Activated CD8-positive, alpha-beta T cell treated with anti-CD3 and anti-CD28 coated beads for 36 hours (primary cell): ENCODE measurements at regions of chr9 and their contacts with region 1.

Region 1: GRCh38 chr9:69054989-69055388 is 19.4 kb downstream of the FXN start:
- DNase-seq: no peak
- ATAC-seq: no peak
- H3K4me3 Mint-ChIP-seq: no peak overlapping the region
- H3K27ac Mint-ChIP-seq: no peak overlapping the region
- H3K4me1 Mint-ChIP-seq: peaks cover 2% of the 10 kb centered on the region
- H3K27me3 Mint-ChIP-seq: no peaks in the 10 kb centered on the region
- CTCF ChIP-seq: no peak

Region 2: DNA sequence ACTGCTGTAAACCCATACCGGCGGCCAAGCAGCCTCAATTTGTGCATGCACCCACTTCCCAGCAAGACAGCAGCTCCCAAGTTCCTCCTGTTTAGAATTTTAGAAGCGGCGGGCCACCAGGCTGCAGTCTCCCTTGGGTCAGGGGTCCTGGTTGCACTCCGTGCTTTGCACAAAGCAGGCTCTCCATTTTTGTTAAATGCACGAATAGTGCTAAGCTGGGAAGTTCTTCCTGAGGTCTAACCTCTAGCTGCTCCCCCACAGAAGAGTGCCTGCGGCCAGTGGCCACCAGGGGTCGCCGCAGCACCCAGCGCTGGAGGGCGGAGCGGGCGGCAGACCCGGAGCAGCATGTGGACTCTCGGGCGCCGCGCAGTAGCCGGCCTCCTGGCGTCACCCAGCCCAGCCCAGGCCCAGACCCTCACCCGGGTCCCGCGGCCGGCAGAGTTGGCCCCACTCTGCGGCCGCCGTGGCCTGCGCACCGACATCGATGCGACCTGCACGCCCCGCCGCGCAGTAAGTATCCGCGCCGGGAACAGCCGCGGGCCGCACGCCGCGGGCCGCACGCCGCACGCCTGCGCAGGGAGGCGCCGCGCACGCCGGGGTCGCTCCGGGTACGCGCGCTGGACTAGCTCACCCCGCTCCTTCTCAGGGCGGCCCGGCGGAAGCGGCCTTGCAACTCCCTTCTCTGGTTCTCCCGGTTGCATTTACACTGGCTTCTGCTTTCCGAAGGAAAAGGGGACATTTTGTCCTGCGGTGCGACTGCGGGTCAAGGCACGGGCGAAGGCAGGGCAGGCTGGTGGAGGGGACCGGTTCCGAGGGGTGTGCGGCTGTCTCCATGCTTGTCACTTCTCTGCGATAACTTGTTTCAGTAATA is 19.3 kb before region 1 on chr9 and contains the start of gene FXN:
- CTCF ChIA-PET with region 1: interaction called, 13 read pairs
- POLR2A ChIA-PET with region 1: interaction called, 3 read pairs
- intact Hi-C with region 1: no loop called
- DNase-seq: peak; percentile 82
- ATAC-seq: peak; percentile 95
- H3K4me3 Mint-ChIP-seq: peak within 1 kb of the TSS; percentile 95
- H3K27ac Mint-ChIP-seq: peak within 1 kb of the TSS; percentile 93
- H3K4me1 Mint-ChIP-seq: peaks cover 22% of the 10 kb centered on the region
- H3K27me3 Mint-ChIP-seq: no peaks in the 10 kb centered on the region
- CTCF ChIP-seq: peak; percentile 98
- total RNA-seq, gene FXN: 21.0 to 21.8 TPM

Region 3: DNA sequence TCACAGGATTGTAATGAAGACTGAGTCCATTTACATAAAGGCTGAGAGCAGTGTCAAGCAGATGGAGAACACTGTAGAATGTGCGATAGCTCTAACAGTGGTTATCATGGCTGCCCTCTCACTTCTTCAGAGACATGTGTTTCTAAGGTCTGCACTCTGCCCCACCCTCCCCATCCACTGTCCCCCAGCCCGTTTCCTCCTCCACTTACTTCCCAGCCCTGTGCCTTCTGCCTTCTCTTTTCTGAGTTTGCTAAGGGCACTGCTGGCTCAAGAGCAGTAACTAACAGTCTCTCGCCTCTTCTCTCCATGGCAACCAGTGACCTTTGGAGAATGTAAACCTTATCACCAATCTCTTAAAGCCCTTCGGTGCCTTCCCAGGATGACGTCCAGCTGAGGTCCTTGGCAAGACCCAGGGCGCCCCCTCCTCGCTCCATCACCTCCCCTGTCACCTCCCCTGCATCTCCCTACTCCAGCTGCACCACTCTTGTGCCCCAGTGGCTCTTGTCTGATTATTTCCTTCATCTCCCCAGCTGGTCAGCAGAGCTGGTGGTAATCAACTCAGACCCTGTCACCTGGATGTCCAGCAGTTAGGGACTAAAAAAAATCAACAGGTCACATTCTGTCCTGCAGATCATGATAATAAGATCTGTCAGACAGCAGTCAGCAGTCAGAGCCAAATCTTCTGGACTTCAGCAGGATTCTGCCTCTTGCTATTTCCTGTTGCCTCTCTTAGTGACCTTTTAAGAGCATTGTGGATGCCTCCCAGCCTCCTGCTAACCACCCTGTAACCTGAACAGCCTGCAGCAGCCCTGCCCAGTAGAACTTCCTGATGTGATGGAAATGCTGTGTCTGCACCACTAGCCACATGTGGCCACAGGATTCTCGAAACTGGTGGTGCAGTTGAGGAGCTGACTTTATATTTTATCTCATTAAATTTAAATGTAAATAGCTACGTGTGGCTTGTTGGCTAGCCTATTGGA is 10.5 kb before region 1 on chr9:
- CTCF ChIA-PET with region 1: interaction called, 10 read pairs
- POLR2A ChIA-PET with region 1: no interaction called
- intact Hi-C with region 1: no loop called
- DNase-seq: peak; percentile 45
- ATAC-seq: peak; percentile 87
- H3K4me3 Mint-ChIP-seq: no peak overlapping the region
- H3K27ac Mint-ChIP-seq: peak overlapping the region; percentile 59
- H3K4me1 Mint-ChIP-seq: peaks cover 19% of the 10 kb centered on the region
- H3K27me3 Mint-ChIP-seq: no peaks in the 10 kb centered on the region
- CTCF ChIP-seq: no peak

Region 4: DNA sequence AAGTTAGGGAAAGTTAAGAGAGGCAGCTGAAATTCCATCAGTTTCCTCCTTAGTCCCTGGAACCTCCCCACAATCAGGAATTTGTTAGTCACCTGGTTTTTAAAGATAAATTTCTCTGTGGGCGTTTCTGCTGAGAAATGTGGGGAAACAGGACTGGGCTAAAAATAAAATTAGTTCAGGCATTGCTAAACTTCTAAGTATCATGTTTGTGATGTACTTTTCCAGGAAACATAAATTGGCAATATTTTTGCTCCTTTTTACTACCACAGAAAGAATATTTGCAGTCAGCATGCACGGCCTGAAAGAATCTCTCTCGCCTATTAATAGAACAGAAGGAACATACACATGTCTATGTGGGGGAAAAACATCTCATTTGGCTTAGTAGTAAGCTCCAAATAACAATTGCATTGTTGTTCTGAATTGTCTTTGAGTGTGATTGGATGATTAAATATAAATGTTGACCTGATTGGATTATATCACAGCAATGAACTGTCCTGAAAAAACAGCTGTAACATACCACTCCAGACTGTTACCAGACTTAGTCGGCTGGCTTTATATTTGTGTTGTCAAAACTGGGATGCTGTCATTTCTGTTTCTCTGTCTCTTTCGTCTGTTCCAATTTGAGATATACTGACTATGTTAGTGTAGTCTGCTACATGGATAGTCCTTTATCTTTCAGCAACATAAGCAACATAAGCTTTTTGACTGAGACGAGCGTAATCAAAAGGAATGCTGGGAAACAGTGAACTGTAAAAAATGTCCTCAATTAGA is 132.0 kb after region 1 on chr9:
- CTCF ChIA-PET with region 1: interaction called, 174 read pairs
- POLR2A ChIA-PET with region 1: no interaction called
- intact Hi-C with region 1: no loop called
- DNase-seq: no peak
- ATAC-seq: no peak
- H3K4me3 Mint-ChIP-seq: no peak overlapping the region
- H3K27ac Mint-ChIP-seq: peak overlapping the region; percentile 52
- H3K4me1 Mint-ChIP-seq: peaks cover 11% of the 10 kb centered on the region
- H3K27me3 Mint-ChIP-seq: no peaks in the 10 kb centered on the region
- CTCF ChIP-seq: no peak

Region 5: DNA sequence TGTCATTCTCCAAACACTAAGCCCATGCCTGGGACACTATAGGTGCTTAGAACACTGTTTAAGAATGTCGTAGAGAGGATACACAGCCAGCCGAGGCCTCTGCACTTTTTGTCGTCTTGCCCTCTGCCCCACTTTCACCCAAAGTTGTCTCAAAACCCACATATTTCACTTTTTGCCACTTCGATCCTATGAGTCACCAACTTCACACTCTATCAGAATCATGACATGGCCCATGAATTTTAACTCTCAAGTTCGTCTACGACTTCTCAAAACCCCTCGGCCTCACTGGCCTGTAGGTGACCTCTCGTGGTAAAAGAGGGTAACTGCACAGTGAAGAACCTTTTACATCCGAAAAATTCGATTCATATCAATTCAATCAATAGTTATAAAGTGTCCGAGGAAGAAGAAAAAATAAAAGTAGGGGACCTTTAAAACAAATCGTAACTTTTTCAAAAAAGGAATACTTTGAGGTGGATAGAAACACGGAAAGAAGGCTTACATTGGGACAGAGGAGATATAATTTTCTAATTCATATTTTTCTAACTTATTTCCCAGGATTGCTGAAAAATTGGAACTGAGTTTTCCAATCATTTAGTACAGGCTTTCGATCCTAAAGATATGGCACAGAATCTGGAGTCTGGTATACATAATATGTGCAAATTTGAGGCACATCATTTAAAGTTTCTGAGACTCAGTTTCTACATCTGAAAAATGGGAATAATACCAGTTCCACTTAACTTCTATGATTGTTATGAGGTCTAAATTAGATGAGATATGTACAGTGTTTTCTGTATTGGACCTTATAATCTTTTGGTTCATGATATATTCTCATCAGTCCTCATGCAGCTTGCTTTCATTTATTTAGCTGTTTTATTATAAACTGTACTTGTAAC is 494.6 kb after region 1 on chr9:
- CTCF ChIA-PET with region 1: no interaction called
- POLR2A ChIA-PET with region 1: no interaction called
- intact Hi-C with region 1: loop called (anchors 5 kb)
- DNase-seq: peak; percentile 46
- ATAC-seq: peak; percentile 89
- H3K4me3 Mint-ChIP-seq: no peak overlapping the region
- H3K27ac Mint-ChIP-seq: no peak overlapping the region
- H3K4me1 Mint-ChIP-seq: peaks cover 3% of the 10 kb centered on the region
- H3K27me3 Mint-ChIP-seq: peaks cover 19% of the 10 kb centered on the region
- CTCF ChIP-seq: peak; percentile 85